Heart left ventricle (tissue), 16 donors: ENCODE measurements at regions of chr4 and their contacts with region 1.

Region 1: GRCh38 chr4:140930557-140930956 is 174.4 kb upstream of the TBC1D9 start:
- DNase-seq: peak in 1 of 5 donors; percentile 63
- ATAC-seq: peak; percentile 82 to 91 (median 87)
- H3K4me3 ChIP-seq: no peak overlapping the region
- H3K27ac ChIP-seq: peak overlapping the region in 6 of 12 donors; percentile 6 to 60 (median 47)
- H3K4me1 ChIP-seq: peaks cover 0 to 58% (median 14%) of the 10 kb centered on the region in 12 donors
- H3K27me3 ChIP-seq: no peaks in the 10 kb centered on the region
- CTCF ChIP-seq: no peak
- POLR2A ChIP-seq: no peak

Region 2: DNA sequence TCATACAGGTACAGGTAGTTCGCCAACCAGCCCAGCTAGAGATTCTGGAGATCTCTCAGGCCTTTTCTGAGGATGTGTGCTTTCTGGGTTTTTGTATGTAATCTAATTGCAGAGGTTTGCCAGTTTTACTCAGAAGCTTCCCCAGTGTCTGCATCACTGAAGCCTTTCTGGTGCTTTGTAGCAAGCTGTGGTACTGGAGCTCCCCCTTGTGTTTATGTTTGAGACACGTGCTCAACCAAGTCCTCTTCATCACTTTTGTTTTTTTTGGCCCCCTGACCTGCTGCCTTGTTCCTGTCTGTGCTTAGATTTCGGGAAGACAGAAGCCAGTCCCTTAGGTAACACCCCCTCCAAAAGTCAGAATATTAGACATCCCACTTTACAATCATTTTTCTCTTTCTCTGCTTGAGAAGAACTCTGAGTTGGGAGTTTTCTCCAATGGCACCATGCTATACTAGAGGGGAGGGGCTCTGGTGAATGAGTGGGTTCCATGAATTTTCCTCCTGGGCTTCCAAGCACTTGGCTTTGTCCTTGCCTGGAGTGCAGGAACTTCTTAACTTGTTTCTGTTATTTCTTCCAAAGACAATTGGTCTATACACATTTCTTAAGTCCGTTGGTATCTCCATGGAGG is 46.0 kb before region 1 on chr4:
- intact Hi-C with region 1: loop called in 1 of 10 experiments (anchors 5 kb)
- DNase-seq: peak in 4 of 5 donors; percentile 39 to 60 (median 44)
- ATAC-seq: peak; percentile 47 to 72 (median 70)
- H3K4me3 ChIP-seq: no peak overlapping the region
- H3K27ac ChIP-seq: peak overlapping the region in 1 of 12 donors; percentile 30
- H3K4me1 ChIP-seq: peaks cover 0 to 16% (median 3%) of the 10 kb centered on the region in 12 donors
- H3K27me3 ChIP-seq: no peaks in the 10 kb centered on the region
- CTCF ChIP-seq: peak; percentile 50 to 71 (median 61)
- POLR2A ChIP-seq: no peak

Region 3: GRCh38 chr4:140982613-140983340 is 52.2 kb after region 1 on chr4:
- intact Hi-C with region 1: loop called in 1 of 10 experiments (anchors 5 kb)
- DNase-seq: no peak
- ATAC-seq: peak; percentile 76 to 87 (median 83)
- H3K4me3 ChIP-seq: no peak overlapping the region
- H3K27ac ChIP-seq: peak overlapping the region in 9 of 12 donors; percentile 29 to 77 (median 46)
- H3K4me1 ChIP-seq: peaks cover 0 to 45% (median 15%) of the 10 kb centered on the region in 12 donors
- H3K27me3 ChIP-seq: no peaks in the 10 kb centered on the region
- CTCF ChIP-seq: no peak
- POLR2A ChIP-seq: no peak

Region 4: GRCh38 chr4:140996766-140997165 is 66.2 kb after region 1 on chr4:
- intact Hi-C with region 1: loop called in 1 of 10 experiments (anchors 2 kb)
- DNase-seq: no peak
- ATAC-seq: no peak
- H3K4me3 ChIP-seq: no peak overlapping the region
- H3K27ac ChIP-seq: peak overlapping the region in 6 of 12 donors; percentile 1 to 75 (median 38)
- H3K4me1 ChIP-seq: peaks cover 0 to 57% (median 22%) of the 10 kb centered on the region in 12 donors
- H3K27me3 ChIP-seq: no peaks in the 10 kb centered on the region
- CTCF ChIP-seq: peak in 1 of 12 donors; percentile 41
- POLR2A ChIP-seq: no peak